Activated CD4-positive, alpha-beta T cell treated with anti-CD3 and anti-CD28 coated beads, Interleukin-2, amount 10 ng/mL, durations not matched to agents 24 days and 14 days (primary cell): ENCODE measurements at regions of chr9 and their contacts with region 1.

Region 1: DNA sequence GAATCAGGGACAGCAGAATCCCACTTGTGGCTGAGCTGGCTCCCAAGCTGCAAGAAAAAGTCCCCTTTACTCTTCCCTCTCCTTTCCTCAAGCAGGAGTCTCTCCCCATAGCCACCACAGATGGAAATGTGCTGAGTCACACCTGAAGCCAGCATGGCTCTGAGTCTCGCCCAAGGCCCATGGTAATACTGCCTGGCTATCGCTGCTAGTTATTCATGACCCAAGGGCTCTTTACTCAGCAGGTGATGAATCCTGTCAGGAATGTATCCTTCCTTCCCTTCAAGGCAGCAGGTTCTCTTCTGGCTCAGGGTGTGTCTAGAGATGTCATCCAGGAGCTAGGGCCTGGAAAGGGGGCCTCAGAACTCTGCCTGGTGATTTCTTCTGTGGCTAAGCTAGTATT is 403.3 kb upstream of the PTPRD start:
- DNase-seq: no peak
- H3K4me3 Mint-ChIP-seq: no peak overlapping the region
- H3K27ac Mint-ChIP-seq: no peak overlapping the region
- H3K4me1 Mint-ChIP-seq: no peaks in the 10 kb centered on the region
- H3K27me3 Mint-ChIP-seq: no peaks in the 10 kb centered on the region

Region 2: GRCh38 chr9:10331157-10331556 is 684.9 kb before region 1 on chr9:
- intact Hi-C with region 1: no loop called
- DNase-seq: no peak
- H3K4me3 Mint-ChIP-seq: no peak overlapping the region
- H3K27ac Mint-ChIP-seq: no peak overlapping the region
- H3K4me1 Mint-ChIP-seq: no peaks in the 10 kb centered on the region
- H3K27me3 Mint-ChIP-seq: no peaks in the 10 kb centered on the region

Region 3: GRCh38 chr9:11064897-11065296 is 48.8 kb after region 1 on chr9:
- intact Hi-C with region 1: loop called (anchors 10 kb)
- DNase-seq: no peak
- H3K4me3 Mint-ChIP-seq: no peak overlapping the region
- H3K27ac Mint-ChIP-seq: no peak overlapping the region
- H3K4me1 Mint-ChIP-seq: no peaks in the 10 kb centered on the region
- H3K27me3 Mint-ChIP-seq: no peaks in the 10 kb centered on the region

Region 4: GRCh38 chr9:11149065-11149464 is 133.0 kb after region 1 on chr9:
- intact Hi-C with region 1: no loop called
- DNase-seq: no peak
- H3K4me3 Mint-ChIP-seq: no peak overlapping the region
- H3K27ac Mint-ChIP-seq: no peak overlapping the region
- H3K4me1 Mint-ChIP-seq: no peaks in the 10 kb centered on the region
- H3K27me3 Mint-ChIP-seq: no peaks in the 10 kb centered on the region